ENCODE measurements at regions of chr11 and their contacts with region 1.

Region 1: GRCh38 chr11:23151819-23152218 is 291.5 kb upstream of the CCDC179 start:
- DNase-seq: no peak
- H3K4me3 Mint-ChIP-seq: no peak overlapping the region
- H3K27ac Mint-ChIP-seq: no peak overlapping the region
- H3K4me1 Mint-ChIP-seq: no peaks in the 10 kb centered on the region
- H3K27me3 Mint-ChIP-seq: no peaks in the 10 kb centered on the region
- CTCF ChIP-seq: no peak

Region 2: DNA sequence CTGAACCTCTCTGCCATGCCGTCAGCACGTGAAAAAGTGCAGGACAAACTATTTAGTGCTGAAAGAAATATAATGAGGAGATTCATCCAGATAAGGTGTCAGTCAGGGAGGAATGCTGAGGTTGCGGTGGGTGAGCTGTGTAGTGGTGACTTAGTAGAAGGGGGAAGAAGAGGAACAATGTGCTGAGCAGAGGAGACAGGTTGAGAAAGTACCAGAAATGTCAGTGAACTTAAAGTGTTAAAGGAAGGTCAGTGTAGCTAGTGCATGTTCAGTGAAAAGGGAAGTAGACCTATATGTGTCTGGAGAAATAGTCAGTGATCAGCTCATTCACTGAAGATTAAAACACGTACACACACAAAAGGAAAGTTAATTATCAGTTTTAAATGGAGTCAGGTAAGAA is 53.9 kb before region 1 on chr11:
- CTCF ChIA-PET with region 1: no interaction called
- intact Hi-C with region 1: no loop called
- DNase-seq: no peak
- H3K4me3 Mint-ChIP-seq: no peak overlapping the region
- H3K27ac Mint-ChIP-seq: no peak overlapping the region
- H3K4me1 Mint-ChIP-seq: no peaks in the 10 kb centered on the region
- H3K27me3 Mint-ChIP-seq: no peaks in the 10 kb centered on the region
- CTCF ChIP-seq: no peak

Region 3: DNA sequence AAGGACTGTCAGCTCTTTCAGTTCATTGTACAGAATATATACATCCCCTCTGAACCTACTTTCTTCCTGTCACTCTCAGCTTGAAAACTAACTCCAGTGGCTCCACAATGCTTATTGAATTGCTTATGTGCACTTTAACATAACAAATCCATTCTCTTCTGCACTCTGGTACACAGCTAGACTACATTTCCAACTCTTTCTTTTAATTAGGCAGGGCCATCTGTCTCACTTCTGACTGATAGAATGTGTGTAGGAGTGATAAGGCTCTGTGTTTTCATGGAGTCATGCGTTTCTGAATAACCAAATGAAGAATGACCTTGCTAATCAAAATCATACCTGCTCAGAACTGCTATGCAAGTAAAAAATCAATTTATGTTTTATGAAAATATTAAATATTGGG is 13.1 kb before region 1 on chr11:
- CTCF ChIA-PET with region 1: no interaction called
- intact Hi-C with region 1: no loop called
- DNase-seq: no peak
- H3K4me3 Mint-ChIP-seq: no peak overlapping the region
- H3K27ac Mint-ChIP-seq: no peak overlapping the region
- H3K4me1 Mint-ChIP-seq: no peaks in the 10 kb centered on the region
- H3K27me3 Mint-ChIP-seq: no peaks in the 10 kb centered on the region
- CTCF ChIP-seq: no peak

Region 4: DNA sequence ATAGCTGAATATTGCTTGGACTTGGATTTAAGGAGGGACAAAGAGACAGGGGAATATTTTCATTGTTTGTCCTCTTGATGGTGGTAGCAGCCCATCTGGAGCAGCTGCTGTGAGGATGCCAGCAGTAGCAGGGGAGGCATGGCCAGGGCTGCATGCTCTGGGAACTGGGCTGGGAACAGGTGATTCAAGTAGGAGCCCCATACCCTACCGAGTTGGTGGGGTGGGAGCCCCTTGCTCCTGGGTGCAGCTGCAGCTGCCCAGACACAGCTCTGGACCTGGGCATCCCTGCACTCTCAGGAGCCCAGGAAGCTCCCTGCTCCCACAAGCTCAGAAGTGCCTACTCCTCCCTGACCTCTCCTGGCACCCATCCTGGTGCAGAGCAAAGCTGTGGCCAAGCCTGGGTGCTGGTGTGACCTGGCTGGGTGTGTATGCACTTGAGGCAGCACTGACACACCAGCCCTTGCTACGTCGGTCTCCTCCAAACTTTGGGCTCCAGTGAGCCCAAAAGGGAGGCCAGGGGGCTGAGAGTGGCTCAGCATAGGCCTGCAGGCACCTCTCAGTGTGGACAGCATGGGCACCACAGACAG is 50.2 kb after region 1 on chr11:
- CTCF ChIA-PET with region 1: no interaction called
- intact Hi-C with region 1: loop called (anchors 1 kb)
- DNase-seq: no peak
- H3K4me3 Mint-ChIP-seq: no peak overlapping the region
- H3K27ac Mint-ChIP-seq: no peak overlapping the region
- H3K4me1 Mint-ChIP-seq: peaks cover 9% of the 10 kb centered on the region
- H3K27me3 Mint-ChIP-seq: no peaks in the 10 kb centered on the region
- CTCF ChIP-seq: no peak

Region 5: DNA sequence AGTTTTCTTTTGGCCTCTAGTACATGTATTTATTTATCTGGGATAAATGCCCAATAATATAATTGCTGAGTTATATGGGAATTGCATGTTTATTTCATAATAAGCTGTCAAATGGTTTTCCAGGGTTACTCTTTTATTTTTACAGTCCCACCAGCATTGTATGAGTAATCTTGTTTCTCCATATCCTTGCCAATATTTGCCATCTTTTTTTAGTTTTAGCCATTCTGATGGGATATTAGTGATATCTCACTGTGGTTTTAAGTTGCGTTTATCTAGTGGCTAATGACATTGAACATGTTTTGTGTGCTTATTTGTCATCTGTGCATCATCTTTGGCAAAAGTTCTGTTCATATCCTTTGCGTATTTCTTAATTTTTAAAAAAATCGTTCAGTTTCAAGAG is 81.3 kb after region 1 on chr11:
- CTCF ChIA-PET with region 1: no interaction called
- intact Hi-C with region 1: no loop called
- DNase-seq: no peak
- H3K4me3 Mint-ChIP-seq: no peak overlapping the region
- H3K27ac Mint-ChIP-seq: no peak overlapping the region
- H3K4me1 Mint-ChIP-seq: no peaks in the 10 kb centered on the region
- H3K27me3 Mint-ChIP-seq: no peaks in the 10 kb centered on the region
- CTCF ChIP-seq: no peak

Measured in Calu3 (cell line).